Mammary epithelial cell (primary cell): ENCODE measurements at regions of chr18 and their contacts with region 1.

Region 1: GRCh38 chr18:12408247-12408869 is 629 bp downstream of the PRELID3A start:
- DNase-seq: no peak
- H3K4me3 ChIP-seq: peak overlapping the region; percentile 58 to 94 (median 74)
- H3K27ac ChIP-seq: peak overlapping the region; percentile 71
- H3K4me1 ChIP-seq: peaks cover 36% of the 10 kb centered on the region
- H3K27me3 ChIP-seq: no peaks in the 10 kb centered on the region
- CTCF ChIP-seq: no peak

Region 2: DNA sequence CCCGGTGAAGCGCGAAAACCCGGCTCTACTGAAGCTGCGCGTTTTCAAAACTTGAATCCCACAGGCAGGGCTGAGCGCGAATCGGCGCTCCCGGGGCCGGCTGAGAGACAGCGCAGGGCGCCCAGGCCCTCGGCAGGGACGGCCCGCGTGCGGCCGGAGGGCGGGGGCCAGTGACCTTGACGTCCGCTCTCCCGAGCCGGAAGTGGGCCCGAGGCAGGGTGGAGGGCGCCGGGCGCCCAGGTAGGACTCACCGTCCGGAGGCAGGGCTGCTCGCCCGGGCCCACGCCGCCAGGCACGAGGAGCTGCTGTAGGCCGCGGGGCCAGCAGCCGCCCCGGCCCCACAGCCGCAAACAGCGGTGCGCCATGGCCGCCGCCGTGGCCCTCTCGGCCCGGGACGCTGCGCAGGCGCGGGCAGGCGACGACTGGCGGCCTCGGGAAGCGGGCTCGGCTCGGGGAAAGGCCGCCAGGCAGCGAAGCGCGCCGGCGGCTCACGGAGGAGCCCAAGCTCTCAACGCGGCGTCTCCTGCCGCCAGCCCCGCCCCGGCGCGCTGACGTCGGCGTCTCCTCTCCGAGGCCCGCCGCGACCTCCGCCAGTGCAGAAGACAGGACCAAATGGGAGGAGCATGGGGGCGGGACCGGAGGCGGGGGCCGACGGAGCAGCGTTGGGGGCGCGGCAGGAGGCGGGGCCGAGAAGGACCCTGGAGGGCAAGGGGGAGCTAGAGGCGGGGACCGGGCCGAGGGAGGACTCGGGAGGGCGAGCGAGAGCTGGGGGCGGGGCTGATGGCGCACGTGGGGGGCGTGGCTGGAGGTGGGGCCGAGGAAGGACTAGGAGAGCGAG is 31.4 kb before region 1 on chr18 and contains the start of gene AFG3L2:
- CTCF ChIA-PET with region 1: no interaction called
- dilution Hi-C with region 1: no loop called
- in situ Hi-C with region 1: no loop called
- intact Hi-C with region 1: loop called (anchors 2 kb)
- DNase-seq: peak; percentile 99
- H3K4me3 ChIP-seq: peak within 1 kb of the TSS; percentile 90 to 95 (median 90)
- H3K27ac ChIP-seq: peak within 1 kb of the TSS; percentile 93
- H3K4me1 ChIP-seq: peaks cover 11% of the 10 kb centered on the region
- H3K27me3 ChIP-seq: no peaks in the 10 kb centered on the region
- CTCF ChIP-seq: no peak
- total RNA-seq, gene AFG3L2: 50.5 to 55.8 TPM

Region 3: GRCh38 chr18:12442946-12443345 is 34.6 kb after region 1 on chr18:
- CTCF ChIA-PET with region 1: no interaction called
- dilution Hi-C with region 1: no loop called
- in situ Hi-C with region 1: no loop called
- intact Hi-C with region 1: loop called (anchors 5 kb)
- DNase-seq: peak; percentile 26
- H3K4me3 ChIP-seq: no peak overlapping the region
- H3K27ac ChIP-seq: no peak overlapping the region
- H3K4me1 ChIP-seq: no peaks in the 10 kb centered on the region
- H3K27me3 ChIP-seq: no peaks in the 10 kb centered on the region
- CTCF ChIP-seq: no peak

Region 4: DNA sequence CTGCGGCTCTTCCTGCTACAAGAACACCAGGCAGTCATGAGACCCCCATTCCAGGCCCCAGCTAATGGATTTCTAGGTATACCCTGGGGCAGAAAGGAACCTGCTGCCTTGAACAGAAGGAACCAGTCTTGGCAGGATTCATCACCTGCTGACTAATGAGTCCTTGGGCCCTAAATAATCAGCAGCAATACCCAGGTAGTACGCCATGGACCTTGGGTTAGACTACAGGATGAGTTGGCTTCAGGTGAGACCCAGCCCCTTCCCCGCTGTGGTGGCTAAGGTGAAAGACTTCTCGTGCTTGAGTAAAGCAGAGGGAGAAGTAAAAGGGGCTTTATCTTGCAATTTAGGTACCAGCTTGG is 144.5 kb after region 1 on chr18:
- CTCF ChIA-PET with region 1: no interaction called
- dilution Hi-C with region 1: no loop called
- in situ Hi-C with region 1: no loop called
- intact Hi-C with region 1: loop called (anchors 10 kb)
- DNase-seq: peak; percentile 62
- H3K4me3 ChIP-seq: no peak overlapping the region
- H3K27ac ChIP-seq: no peak overlapping the region
- H3K4me1 ChIP-seq: peaks cover 19% of the 10 kb centered on the region
- H3K27me3 ChIP-seq: no peaks in the 10 kb centered on the region
- CTCF ChIP-seq: no peak